ENCODE measurements at regions of chr20 and their contacts with region 1.

Region 1: GRCh38 chr20:62065669-62066338 is at the start of gene TAF4:
- DNase-seq: peak; percentile 85
- ATAC-seq: peak; percentile 76
- total RNA-seq, gene TAF4: 20.1 TPM

Region 2: GRCh38 chr20:62121776-62122631 is 56.2 kb after region 1 on chr20 and contains the start of gene LSM14B:
- intact Hi-C with region 1: loop called (anchors 10 kb)
- DNase-seq: peak; percentile 96
- ATAC-seq: peak; percentile 96
- total RNA-seq, gene LSM14B: 26.5 TPM